CD4-positive, alpha-beta memory T cell (primary cell): ENCODE measurements at regions of chrX and their contacts with region 1.

Region 1: GRCh38 chrX:51461053-51462044 is 35.0 kb downstream of the NUDT11 start:
- DNase-seq: peak in 4 of 5 donors; percentile 24 to 42 (median 34)
- H3K4me3 ChIP-seq: no peak overlapping the region
- H3K4me3 Mint-ChIP-seq: no peak overlapping the region
- H3K27ac ChIP-seq: no peak overlapping the region
- H3K27ac Mint-ChIP-seq: no peak overlapping the region
- H3K4me1 ChIP-seq: no peaks in the 10 kb centered on the region
- H3K4me1 Mint-ChIP-seq: no peaks in the 10 kb centered on the region
- H3K27me3 ChIP-seq: no peaks in the 10 kb centered on the region
- H3K27me3 Mint-ChIP-seq: no peaks in the 10 kb centered on the region

Region 2: GRCh38 chrX:51144852-51145442 is 316.4 kb before region 1 on chrX:
- CTCF ChIA-PET with region 1: no interaction called
- POLR2A ChIA-PET with region 1: no interaction called
- intact Hi-C with region 1: loop called (anchors 1 kb)
- DNase-seq: peak in 4 of 5 donors; percentile 4 to 30 (median 21)
- H3K4me3 ChIP-seq: no peak overlapping the region
- H3K4me3 Mint-ChIP-seq: no peak overlapping the region
- H3K27ac ChIP-seq: no peak overlapping the region
- H3K27ac Mint-ChIP-seq: no peak overlapping the region
- H3K4me1 ChIP-seq: no peaks in the 10 kb centered on the region
- H3K4me1 Mint-ChIP-seq: no peaks in the 10 kb centered on the region
- H3K27me3 ChIP-seq: no peaks in the 10 kb centered on the region
- H3K27me3 Mint-ChIP-seq: peaks cover 0 to 5% of the 10 kb centered on the region in 2 donors

Region 3: GRCh38 chrX:51336584-51336983 is 124.8 kb before region 1 on chrX:
- CTCF ChIA-PET with region 1: interaction called, 29 read pairs
- POLR2A ChIA-PET with region 1: no interaction called
- intact Hi-C with region 1: loop called (anchors 1 kb)
- DNase-seq: peak; percentile 28 to 54 (median 30)
- H3K4me3 ChIP-seq: no peak overlapping the region
- H3K4me3 Mint-ChIP-seq: no peak overlapping the region
- H3K27ac ChIP-seq: no peak overlapping the region
- H3K27ac Mint-ChIP-seq: peak overlapping the region in 1 of 7 donors; percentile 47
- H3K4me1 ChIP-seq: no peaks in the 10 kb centered on the region
- H3K4me1 Mint-ChIP-seq: peaks cover 2 to 5% (median 4%) of the 10 kb centered on the region in 4 donors
- H3K27me3 ChIP-seq: no peaks in the 10 kb centered on the region
- H3K27me3 Mint-ChIP-seq: peaks cover 0 to 2% of the 10 kb centered on the region in 2 donors

Region 4: GRCh38 chrX:51420610-51421009 is 40.7 kb before region 1 on chrX:
- CTCF ChIA-PET with region 1: interaction called, 13 read pairs
- POLR2A ChIA-PET with region 1: no interaction called
- intact Hi-C with region 1: no loop called
- DNase-seq: peak; percentile 44 to 50 (median 46)
- H3K4me3 ChIP-seq: no peak overlapping the region
- H3K4me3 Mint-ChIP-seq: no peak overlapping the region
- H3K27ac ChIP-seq: no peak overlapping the region
- H3K27ac Mint-ChIP-seq: no peak overlapping the region
- H3K4me1 ChIP-seq: no peaks in the 10 kb centered on the region
- H3K4me1 Mint-ChIP-seq: peaks cover 0 to 2% (median 1%) of the 10 kb centered on the region in 4 donors
- H3K27me3 ChIP-seq: no peaks in the 10 kb centered on the region
- H3K27me3 Mint-ChIP-seq: no peaks in the 10 kb centered on the region

Region 5: GRCh38 chrX:51476930-51477329 is 15.6 kb after region 1 on chrX:
- CTCF ChIA-PET with region 1: interaction called, 19 read pairs
- POLR2A ChIA-PET with region 1: no interaction called
- intact Hi-C with region 1: no loop called
- DNase-seq: no peak
- H3K4me3 ChIP-seq: no peak overlapping the region
- H3K4me3 Mint-ChIP-seq: no peak overlapping the region
- H3K27ac ChIP-seq: no peak overlapping the region
- H3K27ac Mint-ChIP-seq: no peak overlapping the region
- H3K4me1 ChIP-seq: no peaks in the 10 kb centered on the region
- H3K4me1 Mint-ChIP-seq: no peaks in the 10 kb centered on the region
- H3K27me3 ChIP-seq: no peaks in the 10 kb centered on the region
- H3K27me3 Mint-ChIP-seq: no peaks in the 10 kb centered on the region